MCF 10A (cell line): ENCODE measurements at regions of chr19 and their contacts with region 1.

Region 1: DNA sequence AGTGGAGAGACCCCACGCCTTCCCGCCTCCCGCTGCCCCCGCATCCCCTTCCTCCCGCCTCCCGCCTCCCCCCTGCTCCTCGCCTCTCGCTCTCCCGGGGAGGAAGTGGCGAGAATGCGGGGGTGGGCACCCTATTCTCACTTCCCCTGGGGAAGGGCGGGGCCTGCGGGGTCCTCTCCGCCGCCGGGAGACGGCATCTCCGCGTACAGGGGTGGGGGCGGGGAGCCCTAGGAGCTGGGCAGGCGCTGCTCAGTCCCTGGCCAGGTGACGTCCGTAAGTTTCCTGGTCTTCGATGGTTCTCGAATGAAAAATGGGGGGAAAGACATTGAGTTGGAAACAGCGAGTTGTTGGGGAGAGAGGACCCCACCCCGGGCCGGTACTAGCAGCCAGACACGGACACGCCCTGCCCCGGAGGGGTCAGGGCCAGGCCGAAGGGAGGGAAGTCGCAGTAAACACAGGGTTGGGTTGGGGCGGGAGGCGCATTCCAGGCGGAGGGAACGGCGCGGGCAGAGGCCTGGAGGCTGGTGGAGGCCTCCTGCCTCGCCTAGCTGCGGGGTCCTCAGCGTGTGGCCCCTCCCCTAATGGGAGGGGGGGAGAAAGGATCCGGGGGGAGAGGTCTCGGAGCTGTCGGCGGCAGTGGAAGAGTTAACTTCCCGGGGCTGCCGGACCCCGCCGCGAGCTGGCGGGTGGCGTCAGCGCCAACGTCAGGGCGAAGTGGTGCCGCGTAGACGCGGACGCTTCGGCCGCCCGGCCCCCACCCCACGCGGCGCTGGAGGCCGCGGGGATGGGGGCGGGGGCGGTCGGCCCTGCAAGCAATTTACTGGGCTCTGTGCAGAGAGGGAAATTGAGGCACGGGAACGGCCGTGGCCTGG is 10.4 kb upstream of the JUND start:
- DNase-seq: peak; percentile 70
- H3K4me3 Mint-ChIP-seq: peak overlapping the region; percentile 78
- H3K27ac Mint-ChIP-seq: peak overlapping the region; percentile 97
- H3K4me1 Mint-ChIP-seq: peaks cover 19% of the 10 kb centered on the region
- H3K27me3 Mint-ChIP-seq: no peaks in the 10 kb centered on the region
- CTCF ChIP-seq: no peak

Region 2: DNA sequence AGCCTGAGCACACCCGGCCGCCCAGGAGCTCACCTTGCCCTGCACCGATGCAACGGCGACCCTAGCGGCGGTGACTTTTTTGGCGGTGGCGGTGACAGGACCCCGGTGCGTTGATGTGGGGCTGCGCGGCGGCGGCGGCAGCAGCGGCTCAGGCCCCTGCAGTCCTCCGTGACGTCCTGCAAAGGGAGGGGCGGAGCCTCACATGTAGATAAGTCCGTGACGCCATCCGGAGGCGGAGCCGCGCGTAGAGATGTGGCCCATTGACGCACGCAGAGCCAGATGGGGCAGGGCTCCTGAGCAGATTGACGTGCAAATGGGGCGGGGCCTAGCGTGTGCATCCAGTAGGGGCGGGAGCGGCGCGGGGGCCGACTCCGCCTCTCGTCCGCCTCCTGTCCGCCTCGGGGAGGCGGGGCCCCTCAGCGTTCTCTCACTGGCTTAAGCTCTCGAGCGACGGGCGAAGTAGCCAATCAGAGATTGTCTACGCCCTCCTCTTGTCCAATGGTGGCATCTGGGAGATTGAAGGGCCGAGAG is 87.9 kb before region 1 on chr19 and contains the start of gene RAB3A:
- CTCF ChIA-PET with region 1: no interaction called
- POLR2A ChIA-PET with region 1: interaction called, 10 read pairs
- intact Hi-C with region 1: no loop called
- DNase-seq: peak; percentile 100
- H3K4me3 Mint-ChIP-seq: peak within 1 kb of the TSS; percentile 95
- H3K27ac Mint-ChIP-seq: peak within 1 kb of the TSS; percentile 95
- H3K4me1 Mint-ChIP-seq: peaks cover 5% of the 10 kb centered on the region
- H3K27me3 Mint-ChIP-seq: no peaks in the 10 kb centered on the region
- CTCF ChIP-seq: no peak
- total RNA-seq, gene RAB3A: 0.68 and 0.81 TPM in 2 replicates

Region 3: DNA sequence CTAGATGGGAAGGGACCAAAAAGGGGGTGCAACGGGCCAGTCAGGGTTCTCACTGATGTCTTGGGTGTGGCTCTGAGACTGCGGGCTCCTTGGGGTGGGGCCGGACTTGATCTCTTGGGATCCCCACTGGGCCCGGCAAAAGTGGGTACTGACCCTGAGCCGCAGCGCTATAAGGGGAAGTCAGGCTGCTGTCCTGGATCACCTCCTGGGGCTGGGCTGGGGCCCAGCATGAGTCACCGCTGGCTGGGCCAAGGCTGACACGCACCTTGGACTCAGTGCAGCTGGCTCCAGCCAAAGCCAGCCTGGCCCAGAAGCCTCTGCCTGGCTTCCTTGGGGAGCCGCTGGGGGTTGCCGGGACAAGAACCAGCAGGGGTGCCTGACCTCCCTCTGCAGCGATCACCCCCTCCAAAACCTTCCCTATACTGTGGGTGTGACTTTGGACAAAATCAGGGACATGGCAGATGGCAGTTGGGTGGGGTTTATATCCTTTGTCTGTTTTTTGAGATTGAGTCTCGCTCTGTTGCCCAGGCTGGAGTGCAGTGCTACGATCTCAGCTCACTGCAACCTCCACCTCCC is 17.0 kb before region 1 on chr19:
- CTCF ChIA-PET with region 1: interaction called, 15 read pairs
- POLR2A ChIA-PET with region 1: interaction called, 170 read pairs
- intact Hi-C with region 1: no loop called
- DNase-seq: peak; percentile 94
- H3K4me3 Mint-ChIP-seq: peak overlapping the region; percentile 38
- H3K27ac Mint-ChIP-seq: peak overlapping the region; percentile 79
- H3K4me1 Mint-ChIP-seq: peaks cover 23% of the 10 kb centered on the region
- H3K27me3 Mint-ChIP-seq: no peaks in the 10 kb centered on the region
- CTCF ChIP-seq: peak; percentile 3

Region 4: DNA sequence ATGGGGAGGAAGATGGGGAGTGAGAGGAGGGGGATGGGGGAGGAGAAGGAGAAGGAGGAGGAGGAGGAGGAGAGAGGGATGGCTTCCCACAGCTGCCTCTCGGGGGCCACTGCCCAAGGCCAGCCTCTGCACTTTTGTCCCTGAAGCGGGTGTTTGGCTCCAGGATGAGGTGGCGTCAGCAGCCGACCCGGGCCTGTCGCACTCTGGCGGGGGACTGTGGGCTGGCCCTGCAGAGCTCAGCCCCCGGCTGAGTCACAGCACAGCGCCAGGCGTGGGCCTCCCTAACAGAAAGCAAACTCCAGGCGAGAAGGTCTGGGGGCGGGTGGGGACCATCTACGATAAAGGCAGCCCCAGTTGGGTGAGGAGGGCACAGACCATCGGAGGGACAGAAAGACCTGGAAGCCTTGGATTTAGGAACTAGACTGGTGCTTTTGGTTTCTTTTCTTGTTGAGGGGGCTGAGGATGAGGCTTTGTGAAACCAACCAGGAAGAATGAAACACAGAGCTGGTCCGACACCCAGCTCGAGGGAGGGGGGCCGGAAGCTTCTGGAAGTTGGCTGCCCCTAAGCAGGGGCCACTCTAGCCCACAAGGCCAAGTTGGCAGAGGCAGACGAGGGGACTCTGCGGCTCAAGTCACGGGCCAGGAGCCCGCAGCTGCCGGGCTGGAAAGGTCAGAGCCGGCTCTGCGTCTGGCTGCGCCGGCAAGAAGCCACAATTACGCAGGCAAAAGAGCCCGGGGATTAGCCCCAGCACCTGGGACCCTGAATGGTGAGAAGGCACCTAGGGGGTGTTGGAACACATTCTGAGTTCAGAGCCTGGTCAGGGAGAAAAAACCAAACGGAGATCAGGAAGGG is 12.9 kb after region 1 on chr19:
- CTCF ChIA-PET with region 1: interaction called, 3 read pairs
- POLR2A ChIA-PET with region 1: interaction called, 30 read pairs
- intact Hi-C with region 1: no loop called
- DNase-seq: no peak
- H3K4me3 Mint-ChIP-seq: peak overlapping the region; percentile 53
- H3K27ac Mint-ChIP-seq: peak overlapping the region; percentile 89
- H3K4me1 Mint-ChIP-seq: peaks cover 23% of the 10 kb centered on the region
- H3K27me3 Mint-ChIP-seq: no peaks in the 10 kb centered on the region
- CTCF ChIP-seq: no peak

Region 5: GRCh38 chr19:18349524-18350128 is 57.8 kb after region 1 on chr19:
- CTCF ChIA-PET with region 1: no interaction called
- POLR2A ChIA-PET with region 1: no interaction called
- intact Hi-C with region 1: no loop called
- DNase-seq: peak; percentile 75
- H3K4me3 Mint-ChIP-seq: no peak overlapping the region
- H3K27ac Mint-ChIP-seq: no peak overlapping the region
- H3K4me1 Mint-ChIP-seq: peaks cover 25% of the 10 kb centered on the region
- H3K27me3 Mint-ChIP-seq: peaks cover 12% of the 10 kb centered on the region
- CTCF ChIP-seq: peak; percentile 77